Activated naive CD4-positive, alpha-beta T cell treated with anti-CD3 and anti-CD28 coated beads for 36 hours (primary cell): ENCODE measurements at regions of chr5 and their contacts with region 1.

Region 1: GRCh38 chr5:154647114-154647760 is 107.9 kb upstream of the LARP1 start:
- DNase-seq: peak; percentile 14
- H3K4me3 Mint-ChIP-seq: peak overlapping the region; percentile 55
- H3K27ac Mint-ChIP-seq: no peak overlapping the region
- H3K4me1 Mint-ChIP-seq: peaks cover 12% of the 10 kb centered on the region
- H3K27me3 Mint-ChIP-seq: peaks cover 16% of the 10 kb centered on the region

Region 2: GRCh38 chr5:154811653-154812365 is 164.6 kb after region 1 on chr5:
- CTCF ChIA-PET with region 1: interaction called, 12 read pairs
- intact Hi-C with region 1: loop called (anchors 1 kb)
- DNase-seq: peak; percentile 77
- H3K4me3 Mint-ChIP-seq: no peak overlapping the region
- H3K27ac Mint-ChIP-seq: peak overlapping the region; percentile 11
- H3K4me1 Mint-ChIP-seq: peaks cover 25% of the 10 kb centered on the region
- H3K27me3 Mint-ChIP-seq: no peaks in the 10 kb centered on the region

Region 3: GRCh38 chr5:155004138-155004744 is 357.0 kb after region 1 on chr5:
- CTCF ChIA-PET with region 1: interaction called, 5 read pairs
- intact Hi-C with region 1: loop called (anchors 1 kb)
- DNase-seq: peak; percentile 45
- H3K4me3 Mint-ChIP-seq: no peak overlapping the region
- H3K27ac Mint-ChIP-seq: no peak overlapping the region
- H3K4me1 Mint-ChIP-seq: no peaks in the 10 kb centered on the region
- H3K27me3 Mint-ChIP-seq: peaks cover 19% of the 10 kb centered on the region

Region 4: GRCh38 chr5:155147222-155147621 is 500.0 kb after region 1 on chr5:
- CTCF ChIA-PET with region 1: no interaction called
- intact Hi-C with region 1: loop called (anchors 2 kb)
- DNase-seq: no peak
- H3K4me3 Mint-ChIP-seq: no peak overlapping the region
- H3K27ac Mint-ChIP-seq: no peak overlapping the region
- H3K4me1 Mint-ChIP-seq: peaks cover 2% of the 10 kb centered on the region
- H3K27me3 Mint-ChIP-seq: peaks cover 4% of the 10 kb centered on the region